Left lung (tissue), 14 donors: ENCODE measurements at regions of chr1 and their contacts with region 1.

Region 1: GRCh38 chr1:196651637-196652215 is at the start of gene CFH:
- DNase-seq: peak in 2 of 4 donors; percentile 40 to 58
- ATAC-seq: peak; percentile 88
- H3K4me3 ChIP-seq: peak within 1 kb of the TSS; percentile 10 to 19
- H3K27ac ChIP-seq: peak within 1 kb of the TSS; percentile 43 to 68
- H3K4me1 ChIP-seq: no peaks in the 10 kb centered on the region
- H3K27me3 ChIP-seq: no peaks in the 10 kb centered on the region
- CTCF ChIP-seq: no peak
- polyA plus RNA-seq, gene CFH: 19.7 to 38.5 (median 29.1) TPM

Region 2: GRCh38 chr1:195828325-195828724 is 823.4 kb before region 1 on chr1:
- intact Hi-C with region 1: no loop called
- DNase-seq: no peak
- ATAC-seq: no peak
- H3K4me3 ChIP-seq: no peak overlapping the region
- H3K27ac ChIP-seq: no peak overlapping the region
- H3K4me1 ChIP-seq: no peaks in the 10 kb centered on the region
- H3K27me3 ChIP-seq: no peaks in the 10 kb centered on the region
- CTCF ChIP-seq: no peak

Region 3: DNA sequence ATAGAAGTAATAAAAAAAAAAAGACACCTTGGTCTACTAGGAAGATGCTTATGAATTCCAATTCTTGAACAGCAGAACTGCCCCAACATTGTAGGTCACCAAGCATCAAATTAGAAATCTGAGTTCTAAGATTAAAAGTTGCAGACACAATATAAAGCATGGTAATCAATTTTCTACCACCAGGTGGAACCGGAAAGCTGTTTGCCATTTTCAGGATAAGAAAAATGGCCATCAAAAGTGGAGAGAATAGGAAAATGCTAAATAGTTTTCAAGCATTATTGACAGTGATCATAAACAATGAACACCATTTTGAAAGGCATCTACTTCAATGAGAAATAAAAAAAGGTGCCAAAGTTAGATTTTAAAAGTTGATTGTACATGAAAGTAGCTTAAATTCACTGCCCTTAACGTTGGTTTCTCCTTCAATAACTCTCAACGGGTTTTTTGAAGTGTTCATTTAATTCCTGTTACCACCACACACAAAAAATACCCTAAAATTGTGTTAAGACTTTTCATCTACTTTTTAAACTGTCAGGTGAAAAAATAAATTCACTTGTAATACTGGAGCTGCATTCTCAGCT is 296.4 kb before region 1 on chr1:
- intact Hi-C with region 1: loop called in 1 of 2 experiments (anchors 10 kb)
- DNase-seq: peak in 2 of 4 donors; percentile 4 to 18
- ATAC-seq: peak; percentile 40
- H3K4me3 ChIP-seq: no peak overlapping the region
- H3K27ac ChIP-seq: no peak overlapping the region
- H3K4me1 ChIP-seq: no peaks in the 10 kb centered on the region
- H3K27me3 ChIP-seq: no peaks in the 10 kb centered on the region
- CTCF ChIP-seq: peak in 1 of 2 donors; percentile 38

Region 4: DNA sequence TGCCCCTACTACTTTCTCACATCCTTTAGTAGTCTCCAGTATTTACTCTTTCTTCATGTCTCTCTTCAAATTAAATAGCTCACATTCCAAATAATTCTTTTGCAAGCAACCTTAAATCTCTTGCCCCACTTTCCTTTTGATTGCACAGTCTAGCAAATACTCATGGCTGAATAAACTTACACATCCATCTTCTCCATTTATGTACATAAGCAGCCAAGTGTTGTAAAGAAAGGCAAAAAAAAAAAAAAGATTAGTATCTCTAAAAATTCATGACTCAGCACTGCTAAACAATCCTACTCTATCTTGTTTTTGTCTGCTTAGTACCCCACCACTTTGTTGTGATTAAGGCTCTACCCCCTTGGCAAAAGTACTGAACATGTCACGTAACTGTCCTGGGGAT is 372.7 kb after region 1 on chr1:
- intact Hi-C with region 1: no loop called
- DNase-seq: no peak
- ATAC-seq: peak; percentile 84
- H3K4me3 ChIP-seq: no peak overlapping the region
- H3K27ac ChIP-seq: no peak overlapping the region
- H3K4me1 ChIP-seq: no peaks in the 10 kb centered on the region
- H3K27me3 ChIP-seq: no peaks in the 10 kb centered on the region
- CTCF ChIP-seq: no peak